WTC11 (cell line): ENCODE measurements at regions of chr2 and their contacts with region 1.

Region 1: DNA sequence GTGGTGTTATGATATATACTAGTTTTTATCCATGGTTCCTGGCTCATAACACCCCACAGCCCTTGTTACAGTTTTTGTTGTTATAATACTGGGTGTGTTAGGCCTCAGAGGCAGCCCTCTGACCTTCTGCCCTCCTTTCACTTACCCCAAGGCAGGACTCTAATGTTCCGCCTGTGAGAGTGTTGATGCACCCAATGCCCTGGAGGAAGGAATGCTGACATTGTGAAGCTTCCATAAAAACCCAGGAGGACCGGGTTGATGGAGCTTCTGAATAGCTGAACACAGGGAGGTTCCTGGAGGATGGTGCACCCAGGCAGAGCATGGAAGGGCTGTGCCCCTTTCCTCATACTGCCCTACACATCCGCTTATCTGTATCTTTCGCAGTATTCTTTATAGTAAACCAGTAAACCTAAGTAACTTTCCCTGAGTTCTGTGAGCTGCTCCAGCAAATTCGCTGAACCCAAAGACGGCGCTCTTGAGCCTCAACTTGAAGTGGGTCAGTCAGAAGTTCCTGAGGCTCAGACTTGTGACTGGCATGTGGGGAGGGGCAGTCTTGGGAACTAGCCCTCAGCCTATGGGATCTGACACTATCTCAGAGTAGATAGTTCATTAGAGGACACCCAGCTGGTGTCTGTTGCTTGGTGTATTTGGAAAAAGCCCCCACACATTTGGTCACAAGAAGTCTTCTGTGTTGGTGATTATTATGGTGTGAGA is 10.4 kb downstream of the STON1 start:
- DNase-seq: no peak
- ATAC-seq: peak; percentile 68
- H3K4me3 Mint-ChIP-seq: no peak overlapping the region
- H3K27ac Mint-ChIP-seq: no peak overlapping the region
- H3K4me1 Mint-ChIP-seq: peaks cover 10% of the 10 kb centered on the region
- H3K27me3 Mint-ChIP-seq: no peaks in the 10 kb centered on the region
- CTCF ChIP-seq: no peak

Region 2: DNA sequence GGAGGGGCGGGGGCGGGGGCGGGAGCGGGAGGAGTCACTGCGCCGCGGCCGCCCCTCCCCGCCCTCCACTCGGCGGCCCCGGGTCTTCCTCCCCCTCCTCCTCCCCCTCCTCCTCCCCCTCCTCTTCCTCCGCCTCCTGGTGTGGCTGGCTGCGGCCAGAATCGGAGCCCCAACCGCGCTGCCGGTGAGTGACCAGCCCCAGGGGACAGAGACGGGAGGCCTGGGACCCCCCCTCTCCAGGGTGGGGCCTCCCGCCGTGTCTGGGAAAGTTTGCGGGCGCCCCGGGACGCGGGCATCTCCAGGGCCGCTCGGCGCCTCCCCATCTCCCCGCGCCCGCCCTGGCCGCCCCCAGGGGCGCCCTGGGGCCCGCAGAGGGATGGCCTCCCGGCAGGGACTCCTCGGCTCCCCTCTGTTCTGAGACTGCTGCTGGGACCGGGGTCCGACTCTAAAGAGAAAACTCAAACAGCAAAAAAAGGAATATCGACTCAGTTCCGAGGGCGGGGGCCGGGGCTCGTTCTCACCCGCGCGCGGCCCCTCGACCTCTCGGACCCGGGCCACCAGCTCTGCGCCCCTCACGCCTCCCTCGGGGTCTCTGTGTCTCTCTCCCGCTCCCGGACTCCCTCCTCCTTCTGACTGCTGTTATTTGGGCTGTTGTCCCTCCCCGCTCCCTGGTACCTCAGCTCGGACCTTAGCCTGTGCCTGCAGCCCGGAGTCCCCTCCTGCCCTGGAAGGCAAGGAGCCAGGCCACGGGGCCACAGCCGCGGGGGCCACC is 10.2 kb before region 1 on chr2 and contains the start of gene STON1:
- CTCF ChIA-PET with region 1: interaction called, 15 read pairs
- POLR2A ChIA-PET with region 1: no interaction called
- DNase-seq: peak; percentile 36
- ATAC-seq: peak; percentile 54
- H3K4me3 Mint-ChIP-seq: peak within 1 kb of the TSS; percentile 86
- H3K27ac Mint-ChIP-seq: peak within 1 kb of the TSS; percentile 48; the same call in 1 of the 2 replicates
- H3K4me1 Mint-ChIP-seq: peaks cover 38% of the 10 kb centered on the region
- H3K27me3 Mint-ChIP-seq: no peaks in the 10 kb centered on the region
- CTCF ChIP-seq: no peak
- total RNA-seq, gene STON1: 11.0 to 13.5 TPM (median 13.4 TPM) in 3 replicates